Psoas muscle (tissue), 8 donors: ENCODE measurements at regions of chr1 and their contacts with region 1.

Region 1: DNA sequence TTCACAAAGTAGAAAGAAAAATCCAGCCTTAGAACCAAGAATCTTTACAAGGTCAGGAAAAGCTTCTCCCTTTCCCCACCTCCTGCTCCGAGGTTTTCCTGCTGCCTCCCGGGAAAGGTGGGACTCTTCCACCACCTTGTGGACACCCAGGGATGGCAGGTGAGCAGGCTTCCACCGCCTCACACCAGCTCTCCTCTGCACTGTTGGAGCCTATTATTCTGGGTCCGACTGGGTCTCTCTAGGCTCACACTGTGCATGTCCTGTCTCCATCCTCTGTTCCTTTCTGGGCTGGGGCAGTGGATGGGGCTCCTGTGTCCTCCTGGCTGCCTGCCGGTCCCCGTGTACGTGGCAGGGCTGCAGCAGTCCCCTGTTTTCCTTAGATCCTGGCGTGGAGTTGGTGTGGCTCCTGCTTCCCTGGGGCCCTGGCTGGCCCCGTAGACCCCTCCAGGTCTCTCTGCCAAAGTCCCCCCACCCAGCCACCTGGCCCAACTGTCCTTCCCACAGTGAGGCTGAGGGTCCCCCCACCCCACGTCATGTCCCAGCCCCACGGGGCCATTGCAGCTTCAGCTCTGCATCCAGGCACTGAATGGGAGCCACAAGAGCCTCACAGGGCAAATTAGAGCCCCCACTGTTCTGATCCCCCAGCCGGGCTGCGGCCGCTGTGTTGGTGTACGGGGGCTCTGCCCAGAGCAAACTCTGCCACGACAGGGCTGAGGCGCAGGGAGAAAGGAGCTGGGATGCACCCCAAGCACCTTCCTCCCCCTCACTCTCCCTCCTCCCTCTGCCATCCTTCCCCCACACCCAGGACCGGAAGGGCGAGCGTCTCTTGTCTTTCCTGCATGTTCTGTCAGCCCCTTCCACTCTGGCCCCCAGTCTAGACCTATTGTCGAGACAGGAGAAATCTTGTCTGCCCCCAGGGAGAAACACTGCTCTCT is 3.3 kb upstream of the SLC45A1 start:
- DNase-seq: peak; percentile 73 to 83
- ATAC-seq: peak; percentile 88 to 90 (median 89)
- H3K4me3 ChIP-seq: no peak overlapping the region
- H3K27ac ChIP-seq: no peak overlapping the region
- H3K4me1 ChIP-seq: peaks cover 7% of the 10 kb centered on the region
- H3K27me3 ChIP-seq: peaks cover 0 to 4% (median 0%) of the 10 kb centered on the region in 3 donors
- CTCF ChIP-seq: peak; percentile 85

Region 2: GRCh38 chr1:8031176-8031785 is 283.3 kb before region 1 on chr1:
- intact Hi-C with region 1: loop called (anchors 2 kb)
- DNase-seq: no peak
- ATAC-seq: no peak
- H3K4me3 ChIP-seq: no peak overlapping the region
- H3K27ac ChIP-seq: no peak overlapping the region
- H3K4me1 ChIP-seq: peaks cover 19% of the 10 kb centered on the region
- H3K27me3 ChIP-seq: no peaks in the 10 kb centered on the region
- CTCF ChIP-seq: peak; percentile 78

Region 3: GRCh38 chr1:8238851-8239305 is 75.7 kb before region 1 on chr1:
- intact Hi-C with region 1: no loop called
- DNase-seq: peak; percentile 29 to 58
- ATAC-seq: peak in 2 of 4 donors; percentile 42 to 76
- H3K4me3 ChIP-seq: no peak overlapping the region
- H3K27ac ChIP-seq: no peak overlapping the region
- H3K4me1 ChIP-seq: no peaks in the 10 kb centered on the region
- H3K27me3 ChIP-seq: no peaks in the 10 kb centered on the region
- CTCF ChIP-seq: peak; percentile 17